Activated B cell treated with CpG ODN at 0.5 μM for 24 hours (primary cell): ENCODE measurements at regions of chr16 and their contacts with region 1.

Region 1: DNA sequence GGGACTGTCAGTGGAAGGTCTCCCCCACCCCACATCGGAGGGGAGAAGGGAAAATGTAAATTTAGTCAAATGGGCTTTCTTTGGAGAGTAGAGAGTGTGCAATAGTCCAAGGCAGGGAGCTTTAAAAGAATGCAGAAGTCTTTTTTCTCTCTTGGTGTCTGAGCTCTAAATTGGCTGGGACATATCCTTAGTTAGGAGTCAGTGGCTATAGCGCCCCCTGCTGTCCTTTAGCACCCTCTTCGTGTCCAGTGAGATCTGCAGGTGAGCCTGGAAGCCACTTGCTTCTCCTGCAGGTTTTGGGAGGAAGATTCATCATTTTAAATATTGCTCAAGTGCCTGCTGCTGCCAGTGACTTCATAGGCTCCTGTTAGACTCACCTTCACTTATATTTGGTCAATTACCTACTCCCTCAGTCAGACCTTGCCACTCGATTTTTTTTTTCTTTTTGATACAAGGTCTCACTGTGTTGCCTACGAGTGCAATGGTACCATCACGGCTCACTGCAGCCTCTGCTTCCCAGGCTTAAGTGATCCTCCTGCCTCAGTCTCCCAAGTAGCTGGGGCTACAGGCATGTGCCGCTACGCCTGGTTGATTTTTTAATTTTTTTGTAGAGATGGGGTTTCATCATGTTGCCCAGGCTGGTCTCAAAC is 174.8 kb downstream of the PRKCB start:
- DNase-seq: peak; percentile 52
- ATAC-seq: peak; percentile 12
- H3K4me3 Mint-ChIP-seq: peak overlapping the region; percentile 65
- H3K27ac Mint-ChIP-seq: peak overlapping the region; percentile 72
- H3K4me1 Mint-ChIP-seq: peaks cover 98% of the 10 kb centered on the region
- H3K27me3 Mint-ChIP-seq: no peaks in the 10 kb centered on the region
- CTCF ChIP-seq: peak; percentile 39

Region 2: GRCh38 chr16:23670137-23670776 is 340.3 kb before region 1 on chr16:
- CTCF ChIA-PET with region 1: no interaction called
- POLR2A ChIA-PET with region 1: no interaction called
- intact Hi-C with region 1: loop called (anchors 1 kb)
- DNase-seq: no peak
- ATAC-seq: peak; percentile 96
- H3K4me3 Mint-ChIP-seq: peak overlapping the region; percentile 56
- H3K27ac Mint-ChIP-seq: peak overlapping the region; percentile 6
- H3K4me1 Mint-ChIP-seq: peaks cover 24% of the 10 kb centered on the region
- H3K27me3 Mint-ChIP-seq: no peaks in the 10 kb centered on the region
- CTCF ChIP-seq: no peak

Region 3: DNA sequence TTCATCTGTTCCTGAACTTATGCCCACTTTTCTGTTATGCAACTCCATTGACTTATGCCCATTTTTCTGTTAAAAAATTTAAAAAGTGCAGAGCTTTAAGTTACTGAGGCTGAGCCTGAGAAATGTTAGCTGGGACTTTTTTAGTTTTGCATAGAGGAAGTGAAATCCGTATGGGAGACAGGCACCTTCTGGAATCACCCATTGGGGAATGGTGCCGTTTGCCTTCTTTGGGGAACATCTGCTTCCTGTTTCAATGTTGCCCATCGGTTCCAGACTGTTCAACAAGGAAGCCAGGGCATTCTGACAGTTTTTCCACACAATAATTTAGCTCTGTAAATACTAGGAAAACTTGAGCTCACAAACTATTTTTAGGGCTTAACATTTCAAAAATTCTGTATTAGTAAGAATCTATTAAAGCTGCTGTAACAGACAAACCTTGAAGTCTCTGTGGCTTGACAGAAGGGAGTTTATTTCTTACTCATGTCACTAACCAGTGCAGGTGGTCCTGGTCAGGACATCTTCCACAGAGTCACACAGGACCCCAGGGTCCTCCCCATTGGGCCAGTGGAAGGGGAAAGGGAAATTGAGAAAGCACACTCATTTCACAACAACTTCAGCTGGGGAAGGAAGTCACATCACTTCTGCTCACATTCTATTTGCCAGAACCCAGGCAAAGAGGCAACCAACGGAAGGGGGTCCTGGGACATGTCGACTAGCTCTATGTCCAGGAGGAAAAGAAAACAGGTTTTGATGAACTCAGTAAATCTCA is 157.6 kb before region 1 on chr16:
- CTCF ChIA-PET with region 1: interaction called, 22 read pairs
- POLR2A ChIA-PET with region 1: interaction called, 14 read pairs
- intact Hi-C with region 1: loop called (anchors 5 kb)
- DNase-seq: no peak
- ATAC-seq: peak; percentile 54
- H3K4me3 Mint-ChIP-seq: peak overlapping the region; percentile 67
- H3K27ac Mint-ChIP-seq: peak overlapping the region; percentile 86
- H3K4me1 Mint-ChIP-seq: peaks cover 98% of the 10 kb centered on the region
- H3K27me3 Mint-ChIP-seq: no peaks in the 10 kb centered on the region
- CTCF ChIP-seq: no peak

Region 4: GRCh38 chr16:23877107-23878090 is 133.2 kb before region 1 on chr16:
- CTCF ChIA-PET with region 1: interaction called, 193 read pairs
- POLR2A ChIA-PET with region 1: interaction called, 12 read pairs
- intact Hi-C with region 1: loop called (anchors 1 kb)
- DNase-seq: no peak
- ATAC-seq: peak; percentile 18
- H3K4me3 Mint-ChIP-seq: peak overlapping the region; percentile 28
- H3K27ac Mint-ChIP-seq: peak overlapping the region; percentile 88
- H3K4me1 Mint-ChIP-seq: peaks cover 89% of the 10 kb centered on the region
- H3K27me3 Mint-ChIP-seq: no peaks in the 10 kb centered on the region
- CTCF ChIP-seq: no peak

Region 5: GRCh38 chr16:23952128-23952970 is 58.2 kb before region 1 on chr16:
- CTCF ChIA-PET with region 1: interaction called, 8 read pairs
- POLR2A ChIA-PET with region 1: interaction called, 5 read pairs
- intact Hi-C with region 1: loop called (anchors 2 kb)
- DNase-seq: no peak
- ATAC-seq: peak; percentile 38
- H3K4me3 Mint-ChIP-seq: peak overlapping the region; percentile 42
- H3K27ac Mint-ChIP-seq: peak overlapping the region; percentile 91
- H3K4me1 Mint-ChIP-seq: peaks cover 96% of the 10 kb centered on the region
- H3K27me3 Mint-ChIP-seq: no peaks in the 10 kb centered on the region
- CTCF ChIP-seq: no peak

Region 6: DNA sequence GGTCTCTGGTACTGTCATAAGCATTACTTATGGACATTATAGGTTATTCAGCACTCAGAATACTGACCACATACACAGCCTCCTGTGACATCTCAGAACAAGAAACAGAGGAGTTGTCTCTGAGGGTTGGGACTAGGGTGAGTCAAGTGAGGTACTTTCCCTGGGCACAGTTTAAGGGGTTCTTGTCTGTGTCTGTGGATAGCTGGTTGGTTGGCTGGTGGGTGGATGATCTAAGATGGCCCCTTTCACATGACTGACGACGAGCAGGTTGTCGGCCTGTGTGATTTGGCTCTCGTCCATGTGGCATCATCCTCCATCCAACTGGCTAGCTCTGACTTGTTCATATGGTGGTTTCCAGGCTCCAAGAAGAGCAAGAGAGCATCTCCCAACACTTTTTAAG is 10.9 kb before region 1 on chr16:
- CTCF ChIA-PET with region 1: interaction called, 11 read pairs
- POLR2A ChIA-PET with region 1: interaction called, 3 read pairs
- intact Hi-C with region 1: no loop called
- DNase-seq: no peak
- ATAC-seq: peak; percentile 74
- H3K4me3 Mint-ChIP-seq: no peak overlapping the region
- H3K27ac Mint-ChIP-seq: peak overlapping the region; percentile 57
- H3K4me1 Mint-ChIP-seq: peaks cover 68% of the 10 kb centered on the region
- H3K27me3 Mint-ChIP-seq: no peaks in the 10 kb centered on the region
- CTCF ChIP-seq: no peak

Region 7: DNA sequence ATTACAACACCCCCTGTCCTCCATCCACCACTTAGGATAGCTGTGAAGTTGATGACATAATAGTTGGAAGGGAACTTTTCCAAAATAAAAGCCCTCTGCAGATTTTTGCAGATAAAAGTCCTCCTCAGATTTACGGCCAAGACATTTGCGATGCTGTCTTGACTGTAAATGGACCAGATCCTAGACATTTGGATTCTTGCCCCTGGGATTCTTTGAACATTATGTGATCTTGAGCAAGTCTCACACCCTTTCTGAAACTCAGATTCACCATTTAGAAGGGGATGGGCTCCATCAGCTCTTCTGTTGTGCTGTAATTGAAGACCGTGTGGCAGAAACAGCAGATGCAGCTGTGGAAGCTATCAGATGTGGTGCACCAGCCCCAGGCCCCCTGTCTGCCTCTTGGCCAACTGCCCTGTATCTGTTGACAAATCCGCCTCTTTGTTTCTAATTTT is 91.7 kb after region 1 on chr16:
- CTCF ChIA-PET with region 1: no interaction called
- POLR2A ChIA-PET with region 1: no interaction called
- intact Hi-C with region 1: no loop called
- DNase-seq: no peak
- ATAC-seq: no peak
- H3K4me3 Mint-ChIP-seq: no peak overlapping the region
- H3K27ac Mint-ChIP-seq: peak overlapping the region; percentile 59
- H3K4me1 Mint-ChIP-seq: no peaks in the 10 kb centered on the region
- H3K27me3 Mint-ChIP-seq: no peaks in the 10 kb centered on the region
- CTCF ChIP-seq: no peak

Region 8: GRCh38 chr16:24178496-24178895 is 167.9 kb after region 1 on chr16:
- CTCF ChIA-PET with region 1: no interaction called
- POLR2A ChIA-PET with region 1: no interaction called
- intact Hi-C with region 1: no loop called
- DNase-seq: no peak
- ATAC-seq: no peak
- H3K4me3 Mint-ChIP-seq: no peak overlapping the region
- H3K27ac Mint-ChIP-seq: no peak overlapping the region
- H3K4me1 Mint-ChIP-seq: no peaks in the 10 kb centered on the region
- H3K27me3 Mint-ChIP-seq: no peaks in the 10 kb centered on the region
- CTCF ChIP-seq: no peak